Dendritic cell treated with granulocyte-macrophage colony-stimulating factor and Interleukin-4, amounts not matched to agents 40 ng/mL and 50 ng/mL, for 4 days (primary cell): ENCODE measurements at regions of chr22 and their contacts with region 1.

Region 1: GRCh38 chr22:19730655-19731360 is 7.5 kb downstream of the GP1BB start:
- H3K4me3 Mint-ChIP-seq: peak overlapping the region; percentile 68
- H3K27ac Mint-ChIP-seq: no peak overlapping the region
- H3K4me1 Mint-ChIP-seq: no peaks in the 10 kb centered on the region
- H3K27me3 Mint-ChIP-seq: peaks cover 42% of the 10 kb centered on the region

Region 2: DNA sequence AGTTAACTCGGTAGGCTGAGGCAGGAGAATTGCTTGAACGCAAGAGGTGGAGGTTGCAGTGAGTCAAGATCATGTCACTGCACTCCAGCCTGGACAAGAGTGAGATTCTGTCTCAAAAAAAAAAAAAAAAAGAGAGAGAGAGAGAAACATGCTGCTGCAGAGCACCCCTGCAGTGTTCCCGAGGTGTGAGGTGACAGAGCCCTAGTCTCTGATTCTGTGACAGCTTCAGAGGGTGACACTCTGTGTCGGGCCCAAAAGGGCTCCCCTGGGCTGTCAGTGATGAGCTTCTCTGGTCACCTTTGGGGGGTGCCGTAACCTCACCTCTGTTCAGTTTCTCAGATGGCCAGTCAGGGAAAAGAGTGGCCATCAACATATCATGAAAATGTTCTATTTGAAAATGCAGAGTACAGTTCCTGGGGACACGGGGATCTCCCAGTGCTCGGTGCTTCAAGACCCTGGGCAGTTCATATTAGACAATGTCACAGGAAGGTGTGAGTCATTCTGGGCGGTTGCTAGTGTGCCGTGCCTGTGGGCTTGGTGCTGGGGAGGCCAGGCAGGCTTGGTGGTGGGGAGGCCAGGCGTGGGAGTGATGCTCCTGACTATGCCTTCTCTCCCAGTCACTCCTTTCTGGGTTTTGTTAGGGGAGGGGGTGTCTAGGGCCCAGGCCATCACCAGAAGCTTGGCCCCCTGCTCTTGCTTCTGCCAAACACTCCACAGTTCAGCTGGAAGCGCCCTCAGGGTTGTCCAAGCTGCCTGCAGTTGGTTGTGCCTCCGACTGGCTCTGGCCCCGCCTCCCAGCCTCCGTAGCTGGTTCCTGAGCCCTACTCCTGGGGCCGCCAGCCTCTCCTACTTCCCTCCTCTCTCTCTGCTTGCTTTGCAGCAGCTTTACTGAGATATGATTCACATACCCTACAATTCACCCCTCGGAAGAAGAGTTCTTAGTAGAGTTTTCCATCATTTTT is 154.1 kb before region 1 on chr22:
- intact Hi-C with region 1: no loop called
- H3K4me3 Mint-ChIP-seq: no peak overlapping the region
- H3K27ac Mint-ChIP-seq: no peak overlapping the region
- H3K4me1 Mint-ChIP-seq: peaks cover 40% of the 10 kb centered on the region
- H3K27me3 Mint-ChIP-seq: no peaks in the 10 kb centered on the region

Region 3: DNA sequence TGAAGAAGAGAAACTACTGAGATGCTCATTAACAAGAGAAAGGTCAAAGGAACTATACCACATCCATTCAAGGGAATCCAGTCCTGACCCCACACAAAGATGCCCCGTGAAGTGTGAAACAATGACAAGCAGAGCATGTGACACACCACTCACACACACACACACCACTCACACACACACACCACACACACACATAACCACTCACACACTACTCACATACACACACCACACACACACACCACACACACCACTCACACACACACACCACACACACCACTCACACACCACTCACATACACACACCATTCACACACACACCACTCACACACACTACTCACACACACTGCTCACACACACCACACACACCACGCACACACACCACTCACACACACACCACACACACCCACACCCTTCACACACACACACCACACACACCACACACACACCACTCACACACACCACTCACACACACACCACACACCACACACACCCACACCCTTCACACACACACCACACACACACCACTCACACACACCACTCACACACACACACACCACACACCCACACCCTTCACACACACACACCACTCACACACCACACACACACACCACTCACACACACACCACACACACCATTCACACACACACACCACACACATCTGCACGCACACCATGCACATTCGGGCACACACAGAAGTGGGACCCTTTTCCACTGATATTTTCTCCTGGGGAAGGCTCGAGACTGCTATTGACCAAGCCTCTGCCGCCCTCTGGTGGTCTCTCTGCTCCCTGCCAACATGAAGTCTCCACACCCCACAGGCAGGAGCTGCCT is 178.8 kb after region 1 on chr22:
- intact Hi-C with region 1: loop called (anchors 1 kb)
- H3K4me3 Mint-ChIP-seq: no peak overlapping the region
- H3K27ac Mint-ChIP-seq: no peak overlapping the region
- H3K4me1 Mint-ChIP-seq: peaks cover 5% of the 10 kb centered on the region
- H3K27me3 Mint-ChIP-seq: no peaks in the 10 kb centered on the region